ENCODE measurements at regions of chr6 and their contacts with region 1.

Region 1: GRCh38 chr6:13302751-13303667 is 25.3 kb downstream of the TBC1D7 start:
- DNase-seq: peak; percentile 74
- H3K4me3 Mint-ChIP-seq: peak overlapping the region; percentile 24
- H3K27ac Mint-ChIP-seq: peak overlapping the region; percentile 83
- H3K4me1 Mint-ChIP-seq: peaks cover 27% of the 10 kb centered on the region
- H3K27me3 Mint-ChIP-seq: no peaks in the 10 kb centered on the region

Region 2: GRCh38 chr6:13272131-13273046 is 30.6 kb before region 1 on chr6:
- CTCF ChIA-PET with region 1: no interaction called
- POLR2A ChIA-PET with region 1: no interaction called
- intact Hi-C with region 1: loop called (anchors 2 kb)
- DNase-seq: no peak
- H3K4me3 Mint-ChIP-seq: no peak overlapping the region
- H3K27ac Mint-ChIP-seq: no peak overlapping the region
- H3K4me1 Mint-ChIP-seq: peaks cover 16% of the 10 kb centered on the region
- H3K27me3 Mint-ChIP-seq: no peaks in the 10 kb centered on the region